IMR-90 (cell line): ENCODE measurements at regions of chr12 and their contacts with region 1.

Region 1: GRCh38 chr12:58668871-58669270 is 251.4 kb downstream of the LRIG3 start:
- DNase-seq: peak; percentile 39
- ATAC-seq: peak; percentile 32; the same call in 1 of the 2 replicates
- H3K4me3 ChIP-seq: no peak overlapping the region
- H3K27ac ChIP-seq: no peak overlapping the region
- H3K4me1 ChIP-seq: no peaks in the 10 kb centered on the region
- H3K27me3 ChIP-seq: no peaks in the 10 kb centered on the region
- CTCF ChIP-seq: no peak
- POLR2A ChIP-seq: no peak
- RAD21 ChIP-seq: no peak

Region 2: DNA sequence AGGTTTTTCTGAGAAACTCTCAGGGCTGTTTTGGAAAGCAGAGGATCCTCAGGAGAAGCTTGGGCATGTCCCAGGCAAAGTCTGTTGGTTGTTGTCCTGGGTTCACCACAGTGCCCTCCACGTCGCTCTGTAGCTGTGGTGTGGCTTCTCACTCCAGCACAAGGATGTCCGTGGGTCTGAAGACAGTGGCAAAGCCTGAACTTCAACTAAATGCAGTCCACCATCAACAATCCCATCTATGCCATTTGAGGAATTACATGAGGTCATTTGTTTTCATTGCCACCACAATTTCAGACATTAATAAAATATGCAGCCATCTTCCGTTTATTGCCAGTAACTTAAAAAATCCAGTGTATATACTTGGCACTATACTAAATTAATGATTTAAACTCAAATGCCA is 20.7 kb before region 1 on chr12:
- CTCF ChIA-PET with region 1: interaction called, 10 read pairs
- POLR2A ChIA-PET with region 1: no interaction called
- dilution Hi-C with region 1: no loop called
- in situ Hi-C with region 1: no loop called
- intact Hi-C with region 1: no loop called
- DNase-seq: no peak
- ATAC-seq: peak; percentile 21; the same call in 1 of the 2 replicates
- H3K4me3 ChIP-seq: no peak overlapping the region
- H3K27ac ChIP-seq: peak overlapping the region; percentile 36; the same call in 1 of the 2 replicates
- H3K4me1 ChIP-seq: peaks cover 3% of the 10 kb centered on the region
- H3K27me3 ChIP-seq: no peaks in the 10 kb centered on the region
- CTCF ChIP-seq: no peak
- POLR2A ChIP-seq: no peak
- RAD21 ChIP-seq: no peak